Activated CD4-positive, alpha-beta T cell treated with anti-CD3 and anti-CD28 coated beads, Interleukin-2, amount 10 ng/mL, durations not matched to agents 24 days and 14 days (primary cell): ENCODE measurements at regions of chr20 and their contacts with region 1.

Region 1: DNA sequence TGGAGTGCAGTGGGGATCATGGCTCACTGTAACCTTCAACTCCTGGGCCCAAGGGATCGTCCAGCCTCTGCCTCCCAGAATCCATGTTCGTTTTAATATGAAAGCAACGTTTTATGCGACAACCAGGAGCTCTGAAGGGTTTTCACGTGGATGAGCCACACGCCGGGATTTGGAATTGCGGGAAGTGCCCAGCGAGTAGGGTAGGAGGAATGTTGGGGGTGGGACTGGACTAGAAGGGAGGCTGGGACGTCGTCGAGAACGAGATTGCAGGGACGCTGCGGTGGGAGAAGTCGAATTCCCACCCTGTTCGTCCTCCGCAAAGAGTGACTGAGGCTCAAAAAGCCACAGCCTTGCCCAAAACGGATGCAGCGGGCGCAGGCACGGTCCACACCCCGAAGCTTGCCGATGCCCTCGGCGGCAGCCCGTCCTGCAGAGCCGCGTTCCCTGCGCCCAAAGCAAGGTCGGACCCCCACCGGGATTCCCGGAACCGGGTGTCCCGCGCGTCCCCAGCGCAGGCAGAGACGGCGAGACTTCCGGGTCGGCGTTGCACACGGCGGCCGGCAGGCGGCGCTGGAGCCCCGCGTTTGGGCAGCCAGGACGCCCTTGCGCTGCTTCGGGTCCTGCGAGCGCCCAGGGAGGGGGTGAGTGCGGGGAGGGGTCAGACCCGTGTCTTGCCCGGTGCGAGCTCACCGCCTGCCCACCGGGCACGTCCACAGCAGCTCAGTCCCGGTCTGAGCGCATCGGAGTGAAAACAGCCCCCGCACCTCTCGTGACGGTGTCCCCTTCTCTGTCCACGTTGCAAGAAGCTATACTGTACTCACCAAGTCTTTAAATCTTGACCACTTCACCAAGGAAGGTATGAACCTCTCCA is 87.8 kb downstream of the DHX35 start:
- DNase-seq: peak; percentile 96
- H3K4me3 Mint-ChIP-seq: peak overlapping the region; percentile 88
- H3K27ac Mint-ChIP-seq: peak overlapping the region; percentile 75
- H3K4me1 Mint-ChIP-seq: peaks cover 4% of the 10 kb centered on the region
- H3K27me3 Mint-ChIP-seq: peaks cover 11% of the 10 kb centered on the region

Region 2: GRCh38 chr20:39016041-39016440 is 33.9 kb before region 1 on chr20:
- intact Hi-C with region 1: no loop called
- DNase-seq: no peak
- H3K4me3 Mint-ChIP-seq: peak overlapping the region; percentile 68
- H3K27ac Mint-ChIP-seq: peak overlapping the region; percentile 74
- H3K4me1 Mint-ChIP-seq: peaks cover 35% of the 10 kb centered on the region
- H3K27me3 Mint-ChIP-seq: no peaks in the 10 kb centered on the region

Region 3: GRCh38 chr20:39066471-39067242 is 16.7 kb after region 1 on chr20:
- intact Hi-C with region 1: no loop called
- DNase-seq: no peak
- H3K4me3 Mint-ChIP-seq: no peak overlapping the region
- H3K27ac Mint-ChIP-seq: no peak overlapping the region
- H3K4me1 Mint-ChIP-seq: no peaks in the 10 kb centered on the region
- H3K27me3 Mint-ChIP-seq: peaks cover 10% of the 10 kb centered on the region

Region 4: DNA sequence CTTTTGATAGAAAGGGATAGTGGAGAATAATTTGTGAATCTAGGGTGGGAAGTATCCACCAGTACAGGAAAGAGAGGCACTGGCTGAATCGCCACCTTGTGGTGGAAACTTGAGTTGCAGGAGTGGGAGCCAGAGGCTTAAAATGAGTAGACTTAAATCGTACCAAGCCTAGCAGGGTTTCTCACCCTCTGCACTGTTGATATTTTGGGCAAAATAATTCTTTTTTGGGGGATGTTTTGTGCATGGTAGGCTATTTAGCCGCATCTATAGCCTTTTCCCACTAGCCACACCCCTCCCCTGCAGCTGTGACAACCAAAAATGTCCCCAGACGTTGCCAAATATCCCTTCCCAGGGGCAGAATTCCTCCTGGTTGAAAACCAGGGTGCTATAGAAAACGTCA is 31.3 kb after region 1 on chr20:
- intact Hi-C with region 1: loop called (anchors 1 kb)
- DNase-seq: peak; percentile 95
- H3K4me3 Mint-ChIP-seq: no peak overlapping the region
- H3K27ac Mint-ChIP-seq: no peak overlapping the region
- H3K4me1 Mint-ChIP-seq: peaks cover 3% of the 10 kb centered on the region
- H3K27me3 Mint-ChIP-seq: peaks cover 25% of the 10 kb centered on the region

Region 5: GRCh38 chr20:39474879-39475278 is 425.0 kb after region 1 on chr20:
- intact Hi-C with region 1: no loop called
- DNase-seq: no peak
- H3K4me3 Mint-ChIP-seq: no peak overlapping the region
- H3K27ac Mint-ChIP-seq: no peak overlapping the region
- H3K4me1 Mint-ChIP-seq: no peaks in the 10 kb centered on the region
- H3K27me3 Mint-ChIP-seq: no peaks in the 10 kb centered on the region